ENCODE measurements at regions of chr14 and their contacts with region 1.

Region 1: GRCh38 chr14:32043624-32044023 is 33.5 kb upstream of the ARHGAP5 start:
- DNase-seq: no peak
- ATAC-seq: no peak
- H3K4me3 Mint-ChIP-seq: no peak overlapping the region
- H3K27ac Mint-ChIP-seq: no peak overlapping the region
- H3K4me1 Mint-ChIP-seq: no peaks in the 10 kb centered on the region
- H3K27me3 Mint-ChIP-seq: peaks cover 4% of the 10 kb centered on the region

Region 2: DNA sequence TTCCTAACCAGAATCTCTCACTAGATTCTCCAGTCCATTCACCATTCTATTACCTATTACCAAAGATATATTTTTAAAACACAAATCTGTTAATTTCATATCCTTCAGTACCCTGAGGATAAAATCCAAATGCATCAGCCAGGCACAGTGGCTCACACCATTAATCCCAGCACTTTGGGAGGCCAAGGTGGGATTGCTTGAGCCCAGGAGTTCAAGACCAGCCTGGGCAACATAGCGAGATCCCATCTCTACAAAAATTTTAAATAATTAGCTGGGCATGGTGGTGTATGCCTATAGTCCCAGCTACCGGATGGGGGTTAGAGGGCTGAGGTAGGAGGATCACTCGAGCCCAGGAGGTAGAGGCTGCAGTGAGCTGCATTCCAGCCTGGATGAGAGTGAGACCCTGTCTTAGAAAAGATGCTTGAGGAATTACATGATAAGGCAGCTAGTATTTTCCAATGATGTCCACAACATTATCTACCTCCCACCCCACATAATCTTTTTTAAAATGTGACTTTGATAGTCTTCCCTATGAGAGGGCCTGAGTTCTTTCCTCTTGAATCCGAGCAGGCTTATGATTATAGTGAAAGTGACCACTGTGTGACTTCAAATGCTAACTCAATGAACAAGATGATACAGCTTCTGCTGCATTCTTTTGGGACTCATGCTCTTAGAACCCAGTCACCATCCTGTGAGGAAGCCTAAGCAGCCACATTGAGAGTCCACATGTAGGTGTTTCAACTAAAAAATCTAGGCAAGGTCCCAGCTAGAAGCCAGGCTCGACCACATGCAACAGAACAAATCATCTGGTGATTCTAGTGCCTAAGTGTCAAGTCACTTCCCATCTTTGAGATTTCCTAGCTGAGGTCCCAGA is 854.0 kb before region 1 on chr14:
- CTCF ChIA-PET with region 1: no interaction called
- POLR2A ChIA-PET with region 1: no interaction called
- intact Hi-C with region 1: no loop called
- DNase-seq: no peak
- ATAC-seq: no peak
- H3K4me3 Mint-ChIP-seq: no peak overlapping the region
- H3K27ac Mint-ChIP-seq: no peak overlapping the region
- H3K4me1 Mint-ChIP-seq: peaks cover 34% of the 10 kb centered on the region
- H3K27me3 Mint-ChIP-seq: no peaks in the 10 kb centered on the region

Region 3: GRCh38 chr14:31937721-31938346 is 105.8 kb before region 1 on chr14:
- CTCF ChIA-PET with region 1: no interaction called
- POLR2A ChIA-PET with region 1: no interaction called
- intact Hi-C with region 1: loop called in 1 of 2 experiments (anchors 10 kb)
- DNase-seq: peak; percentile 87
- ATAC-seq: peak; percentile 100
- H3K4me3 Mint-ChIP-seq: no peak overlapping the region
- H3K27ac Mint-ChIP-seq: peak overlapping the region; percentile 28
- H3K4me1 Mint-ChIP-seq: peaks cover 17% of the 10 kb centered on the region
- H3K27me3 Mint-ChIP-seq: peaks cover 2% of the 10 kb centered on the region

Region 4: GRCh38 chr14:32109676-32110547 is 66.3 kb after region 1 on chr14:
- CTCF ChIA-PET with region 1: no interaction called
- POLR2A ChIA-PET with region 1: no interaction called
- intact Hi-C with region 1: no loop called
- DNase-seq: no peak
- ATAC-seq: no peak
- H3K4me3 Mint-ChIP-seq: no peak overlapping the region
- H3K27ac Mint-ChIP-seq: no peak overlapping the region
- H3K4me1 Mint-ChIP-seq: peaks cover 8% of the 10 kb centered on the region
- H3K27me3 Mint-ChIP-seq: no peaks in the 10 kb centered on the region

Measured in activated CD4-positive, alpha-beta T cell treated with anti-CD3 and anti-CD28 coated beads for 36 hours (primary cell).